ENCODE measurements at regions of chr4 and their contacts with region 1.

Region 1: GRCh38 chr4:2354118-2354517 is 64.3 kb downstream of the ZFYVE28 start:
- DNase-seq: peak; percentile 77
- H3K4me3 ChIP-seq: no peak overlapping the region
- H3K27ac ChIP-seq: no peak overlapping the region
- H3K4me1 ChIP-seq: peaks cover 0 to 13% of the 10 kb centered on the region in 2 experiments; a peak in 1 of 4 replicates
- H3K27me3 ChIP-seq: no peaks in the 10 kb centered on the region
- CTCF ChIP-seq: peak; percentile 45
- EP300 ChIP-seq: no peak
- RAD21 ChIP-seq: peak; percentile 59

Region 2: GRCh38 chr4:2339458-2340271 is 14.5 kb before region 1 on chr4:
- CTCF ChIA-PET with region 1: interaction called, 12 read pairs
- POLR2A ChIA-PET with region 1: no interaction called
- DNase-seq: no peak
- H3K4me3 ChIP-seq: no peak overlapping the region
- H3K27ac ChIP-seq: no peak overlapping the region
- H3K4me1 ChIP-seq: no peaks in the 10 kb centered on the region
- H3K27me3 ChIP-seq: no peaks in the 10 kb centered on the region
- CTCF ChIP-seq: no peak
- EP300 ChIP-seq: no peak
- RAD21 ChIP-seq: no peak

Measured in SK-N-SH (cell line).